ENCODE measurements at regions of chr7 and their contacts with region 1.

Region 1: GRCh38 chr7:87152107-87152844 is at the start of gene DMTF1:
- DNase-seq: peak; percentile 94 to 95
- H3K4me3 ChIP-seq: peak within 1 kb of the TSS; percentile 74
- H3K4me3 Mint-ChIP-seq: peak within 1 kb of the TSS; percentile 99
- H3K27ac Mint-ChIP-seq: peak within 1 kb of the TSS; percentile 99
- H3K4me1 ChIP-seq: peaks cover 14% of the 10 kb centered on the region; the same call in 1 of the 2 replicates
- H3K4me1 Mint-ChIP-seq: peaks cover 7% of the 10 kb centered on the region
- H3K27me3 ChIP-seq: no peaks in the 10 kb centered on the region
- H3K27me3 Mint-ChIP-seq: no peaks in the 10 kb centered on the region
- CTCF ChIP-seq: no peak
- total RNA-seq, gene DMTF1: 59.2 and 60.9 TPM in 2 replicates

Region 2: GRCh38 chr7:86846494-86847190 is 305.6 kb before region 1 on chr7:
- CTCF ChIA-PET with region 1: no interaction called
- POLR2A ChIA-PET with region 1: no interaction called
- intact Hi-C with region 1: loop called (anchors 1 kb)
- DNase-seq: peak; percentile 83 to 88
- H3K4me3 ChIP-seq: no peak overlapping the region
- H3K4me3 Mint-ChIP-seq: peak overlapping the region; percentile 59
- H3K27ac Mint-ChIP-seq: peak overlapping the region; percentile 80
- H3K4me1 ChIP-seq: peaks cover 58% of the 10 kb centered on the region
- H3K4me1 Mint-ChIP-seq: peaks cover 44% of the 10 kb centered on the region
- H3K27me3 ChIP-seq: no peaks in the 10 kb centered on the region
- H3K27me3 Mint-ChIP-seq: no peaks in the 10 kb centered on the region
- CTCF ChIP-seq: no peak

Region 3: GRCh38 chr7:86939197-86939814 is 213.0 kb before region 1 on chr7:
- CTCF ChIA-PET with region 1: interaction called, 3 read pairs
- POLR2A ChIA-PET with region 1: interaction called, 3 read pairs
- intact Hi-C with region 1: loop called (anchors 1 kb)
- DNase-seq: peak; percentile 41 to 74
- H3K4me3 ChIP-seq: no peak overlapping the region
- H3K4me3 Mint-ChIP-seq: no peak overlapping the region
- H3K27ac Mint-ChIP-seq: no peak overlapping the region
- H3K4me1 ChIP-seq: no peaks in the 10 kb centered on the region
- H3K4me1 Mint-ChIP-seq: no peaks in the 10 kb centered on the region
- H3K27me3 ChIP-seq: no peaks in the 10 kb centered on the region
- H3K27me3 Mint-ChIP-seq: peaks cover 8% of the 10 kb centered on the region
- CTCF ChIP-seq: peak; percentile 60 to 68

Region 4: DNA sequence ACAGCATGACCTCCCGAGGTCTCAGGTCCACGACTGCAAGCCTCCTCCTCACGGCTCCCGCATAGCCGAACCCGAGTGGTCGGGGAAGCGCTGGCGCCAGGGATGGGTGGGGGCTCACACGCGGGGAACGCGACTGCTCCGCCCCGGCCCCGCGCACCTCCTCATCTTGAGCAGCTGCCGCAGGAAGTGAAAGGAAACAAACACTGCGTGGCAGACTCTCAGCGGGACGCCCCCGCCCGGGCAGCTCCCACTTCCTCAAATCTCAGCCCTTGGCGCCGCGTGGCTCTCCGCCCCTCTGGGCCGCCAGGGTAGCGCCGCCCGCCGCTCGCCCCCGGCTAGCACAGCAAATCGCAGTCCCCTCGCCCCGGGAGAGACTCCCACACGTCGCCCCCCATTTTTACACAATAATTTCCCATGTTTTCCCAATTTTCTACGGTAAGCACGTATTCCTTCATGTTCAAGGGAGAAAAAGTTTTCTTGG is 67.3 kb after region 1 on chr7 and contains the start of gene TMEM243:
- CTCF ChIA-PET with region 1: interaction called, 4 read pairs
- POLR2A ChIA-PET with region 1: interaction called, 19 read pairs
- intact Hi-C with region 1: loop called (anchors 1 kb)
- DNase-seq: peak; percentile 64 to 66
- H3K4me3 ChIP-seq: peak within 1 kb of the TSS; percentile 66
- H3K4me3 Mint-ChIP-seq: peak within 1 kb of the TSS; percentile 97
- H3K27ac Mint-ChIP-seq: peak within 1 kb of the TSS; percentile 74
- H3K4me1 ChIP-seq: peaks cover 5% of the 10 kb centered on the region
- H3K4me1 Mint-ChIP-seq: peaks cover 8% of the 10 kb centered on the region
- H3K27me3 ChIP-seq: no peaks in the 10 kb centered on the region
- H3K27me3 Mint-ChIP-seq: no peaks in the 10 kb centered on the region
- CTCF ChIP-seq: peak; percentile 22 to 26
- total RNA-seq, gene TMEM243: 24.2 and 28.6 TPM in 2 replicates

Region 5: GRCh38 chr7:87345166-87345927 is 193.1 kb after region 1 on chr7 and contains the start of gene CROT:
- CTCF ChIA-PET with region 1: no interaction called
- POLR2A ChIA-PET with region 1: interaction called, 10 read pairs
- intact Hi-C with region 1: no loop called
- DNase-seq: peak; percentile 96 to 97
- H3K4me3 ChIP-seq: peak within 1 kb of the TSS; percentile 71
- H3K4me3 Mint-ChIP-seq: peak within 1 kb of the TSS; percentile 84
- H3K27ac Mint-ChIP-seq: peak within 1 kb of the TSS; percentile 80
- H3K4me1 ChIP-seq: peaks cover 9% of the 10 kb centered on the region; the same call in 1 of the 2 replicates
- H3K4me1 Mint-ChIP-seq: no peaks in the 10 kb centered on the region
- H3K27me3 ChIP-seq: no peaks in the 10 kb centered on the region
- H3K27me3 Mint-ChIP-seq: no peaks in the 10 kb centered on the region
- CTCF ChIP-seq: no peak
- total RNA-seq, gene CROT: 15.4 and 16.9 TPM in 2 replicates

Region 6: GRCh38 chr7:87552351-87552900 is 400.1 kb after region 1 on chr7:
- CTCF ChIA-PET with region 1: no interaction called
- POLR2A ChIA-PET with region 1: no interaction called
- intact Hi-C with region 1: no loop called
- DNase-seq: no peak
- H3K4me3 ChIP-seq: no peak overlapping the region
- H3K4me3 Mint-ChIP-seq: no peak overlapping the region
- H3K27ac Mint-ChIP-seq: no peak overlapping the region
- H3K4me1 ChIP-seq: no peaks in the 10 kb centered on the region
- H3K4me1 Mint-ChIP-seq: peaks cover 14% of the 10 kb centered on the region
- H3K27me3 ChIP-seq: no peaks in the 10 kb centered on the region
- H3K27me3 Mint-ChIP-seq: no peaks in the 10 kb centered on the region
- CTCF ChIP-seq: no peak

Region 7: DNA sequence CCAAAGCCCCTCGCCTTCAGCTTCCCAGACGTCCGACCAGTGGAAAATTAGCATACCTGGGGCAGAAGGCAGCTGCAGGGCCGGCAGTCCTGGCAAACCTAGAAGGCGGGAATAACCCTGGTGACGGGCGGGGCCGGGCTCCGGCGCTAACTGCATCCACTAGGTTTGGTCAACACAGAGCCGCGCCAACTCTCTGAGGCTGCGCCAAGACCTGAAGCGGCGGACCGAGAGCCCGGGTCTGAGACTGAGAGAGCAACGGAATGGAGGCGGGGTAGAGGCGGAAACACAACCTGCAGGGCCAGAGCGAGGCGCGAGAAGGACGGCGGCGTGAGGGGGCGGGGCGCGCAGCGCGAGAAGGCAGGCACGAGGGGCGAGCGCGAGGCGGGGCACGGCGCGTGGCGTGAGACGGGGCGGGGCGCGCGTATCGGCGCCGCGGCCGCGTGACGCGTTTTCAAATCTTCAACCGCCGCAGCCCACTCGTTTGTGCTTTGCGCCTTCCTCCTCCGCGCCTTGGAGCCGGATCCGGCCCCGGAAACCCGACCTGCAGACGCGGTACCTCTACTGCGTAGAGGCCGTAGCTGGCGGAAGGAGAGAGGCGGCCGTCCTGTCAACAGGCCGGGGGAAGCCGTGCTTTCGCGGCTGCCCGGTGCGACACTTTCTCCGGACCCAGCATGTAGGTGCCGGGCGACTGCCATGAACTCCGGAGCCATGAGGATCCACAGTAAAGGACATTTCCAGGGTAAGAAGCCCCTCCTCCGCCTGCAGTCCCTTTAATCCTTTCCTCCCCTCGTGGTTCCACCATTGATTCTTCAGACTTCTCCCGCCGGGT is 724.0 kb after region 1 on chr7 and contains the starts of genes DBF4 and SLC25A40:
- CTCF ChIA-PET with region 1: interaction called, 3 read pairs
- POLR2A ChIA-PET with region 1: no interaction called
- intact Hi-C with region 1: loop called (anchors 5 kb)
- DNase-seq: peak; percentile 98 to 99
- H3K4me3 ChIP-seq: peak within 1 kb of the TSS; percentile 61
- H3K4me3 Mint-ChIP-seq: peak within 1 kb of the TSS; percentile 70
- H3K27ac Mint-ChIP-seq: peak within 1 kb of the TSS; percentile 99
- H3K4me1 ChIP-seq: peaks cover 20% of the 10 kb centered on the region
- H3K4me1 Mint-ChIP-seq: peaks cover 28% of the 10 kb centered on the region
- H3K27me3 ChIP-seq: no peaks in the 10 kb centered on the region
- H3K27me3 Mint-ChIP-seq: no peaks in the 10 kb centered on the region
- CTCF ChIP-seq: no peak
- total RNA-seq, gene DBF4: 55.0 and 62.8 TPM in 2 replicates
- total RNA-seq, gene SLC25A40: 21.1 and 21.8 TPM in 2 replicates